T-cell (primary cell): ENCODE measurements at regions of chr6 and their contacts with region 1.

Region 1: GRCh38 chr6:75114809-75115208 is 91.0 kb downstream of the COL12A1 start:
- DNase-seq: no peak
- ATAC-seq: no peak
- H3K4me3 ChIP-seq: no peak overlapping the region
- H3K4me3 Mint-ChIP-seq: no peak overlapping the region
- H3K27ac ChIP-seq: no peak overlapping the region
- H3K27ac Mint-ChIP-seq: no peak overlapping the region
- H3K4me1 ChIP-seq: no peaks in the 10 kb centered on the region
- H3K4me1 Mint-ChIP-seq: no peaks in the 10 kb centered on the region
- H3K27me3 ChIP-seq: no peaks in the 10 kb centered on the region
- H3K27me3 Mint-ChIP-seq: peaks cover 2 to 16% of the 10 kb centered on the region in 2 donors

Region 2: DNA sequence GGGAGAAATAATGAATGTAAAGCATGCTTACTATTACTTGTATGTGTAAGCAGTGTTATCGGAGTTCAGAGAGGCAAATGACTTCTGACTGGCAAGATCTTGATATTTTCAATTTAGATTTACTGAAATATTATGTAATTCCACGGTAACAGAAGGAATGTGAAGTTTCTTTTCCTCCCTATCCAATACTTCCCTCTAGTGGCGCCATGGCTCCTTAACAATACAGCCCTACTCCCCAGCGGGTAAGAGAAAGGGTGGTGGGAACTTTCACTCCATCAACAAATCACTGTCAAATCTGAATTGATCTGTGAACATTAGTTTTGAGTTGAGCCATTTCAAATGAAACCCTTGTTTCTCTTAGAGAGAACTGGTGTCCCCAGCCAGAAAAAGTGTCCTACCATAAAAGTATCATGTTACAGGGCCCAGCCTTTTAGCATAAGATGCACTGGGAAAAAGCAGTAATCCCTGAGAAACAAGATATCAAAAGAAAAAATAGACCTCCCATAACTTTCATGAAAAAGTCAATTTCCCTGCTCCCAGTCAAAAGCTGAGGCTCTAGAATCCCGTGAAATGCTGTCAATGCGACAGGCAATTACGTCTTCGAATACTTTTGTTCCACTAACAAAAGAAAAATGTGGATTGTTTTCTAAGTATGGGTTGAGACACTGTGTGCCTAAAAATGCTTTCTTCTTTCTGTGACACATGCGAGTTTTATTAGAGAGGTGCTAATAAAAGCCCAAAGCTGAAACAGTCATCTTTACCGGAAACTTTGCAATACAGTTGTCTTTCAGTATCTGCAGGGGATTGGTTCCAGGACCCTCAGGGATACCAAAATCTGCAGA is 115.9 kb after region 1 on chr6:
- CTCF ChIA-PET with region 1: interaction called in 1 of 2 experiments, 10 read pairs
- POLR2A ChIA-PET with region 1: no interaction called
- DNase-seq: no peak
- ATAC-seq: no peak
- H3K4me3 ChIP-seq: no peak overlapping the region
- H3K4me3 Mint-ChIP-seq: no peak overlapping the region
- H3K27ac ChIP-seq: no peak overlapping the region
- H3K27ac Mint-ChIP-seq: no peak overlapping the region
- H3K4me1 ChIP-seq: no peaks in the 10 kb centered on the region
- H3K4me1 Mint-ChIP-seq: no peaks in the 10 kb centered on the region
- H3K27me3 ChIP-seq: no peaks in the 10 kb centered on the region
- H3K27me3 Mint-ChIP-seq: peaks cover 0 to 4% of the 10 kb centered on the region in 2 donors